Heart right ventricle (tissue), 16 donors: ENCODE measurements at regions of chr3 and their contacts with region 1.

Region 1: DNA sequence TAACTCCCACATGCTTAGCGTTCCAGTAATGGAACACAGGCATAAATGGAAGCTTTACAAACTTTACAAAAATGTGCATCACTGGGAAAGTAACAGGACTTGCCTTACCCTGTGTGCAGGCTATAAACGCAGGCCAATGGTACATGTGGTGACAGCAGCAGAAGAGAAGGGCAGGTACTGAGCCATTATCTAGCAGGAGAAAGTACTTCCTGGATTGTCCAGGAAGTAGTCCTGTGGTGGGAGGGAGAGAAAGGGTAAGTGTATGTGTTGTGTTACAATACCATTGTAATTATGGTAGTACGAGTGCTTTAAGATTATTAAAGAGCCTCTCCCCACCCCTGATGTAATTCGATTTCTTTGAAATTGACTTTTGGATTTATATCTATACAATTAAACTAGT is 5.3 kb downstream of the ATP1B3 start:
- DNase-seq: no peak
- ATAC-seq: no peak
- H3K4me3 ChIP-seq: no peak overlapping the region
- H3K27ac ChIP-seq: no peak overlapping the region
- H3K4me1 ChIP-seq: peaks cover 0 to 43% (median 21%) of the 10 kb centered on the region in 9 donors
- H3K27me3 ChIP-seq: no peaks in the 10 kb centered on the region
- CTCF ChIP-seq: no peak

Region 2: GRCh38 chr3:141575879-141576743 is 305.6 kb before region 1 on chr3:
- intact Hi-C with region 1: loop called in 2 of 10 experiments (anchors 10 kb)
- DNase-seq: no peak
- ATAC-seq: peak in 4 of 8 donors; percentile 57 to 64 (median 60)
- H3K4me3 ChIP-seq: no peak overlapping the region
- H3K27ac ChIP-seq: peak overlapping the region in 1 of 10 donors; percentile 10
- H3K4me1 ChIP-seq: peaks cover 0 to 6% (median 0%) of the 10 kb centered on the region in 9 donors
- H3K27me3 ChIP-seq: no peaks in the 10 kb centered on the region
- CTCF ChIP-seq: peak in 8 of 9 donors; percentile 23 to 73 (median 60)

Region 3: GRCh38 chr3:142355692-142356091 is 474.0 kb after region 1 on chr3:
- intact Hi-C with region 1: no loop called
- DNase-seq: no peak
- ATAC-seq: no peak
- H3K4me3 ChIP-seq: no peak overlapping the region
- H3K27ac ChIP-seq: no peak overlapping the region
- H3K4me1 ChIP-seq: no peaks in the 10 kb centered on the region
- H3K27me3 ChIP-seq: no peaks in the 10 kb centered on the region
- CTCF ChIP-seq: no peak